Colonic mucosa (tissue), 4 donors: ENCODE measurements at regions of chr6 and their contacts with region 1.

Region 1: DNA sequence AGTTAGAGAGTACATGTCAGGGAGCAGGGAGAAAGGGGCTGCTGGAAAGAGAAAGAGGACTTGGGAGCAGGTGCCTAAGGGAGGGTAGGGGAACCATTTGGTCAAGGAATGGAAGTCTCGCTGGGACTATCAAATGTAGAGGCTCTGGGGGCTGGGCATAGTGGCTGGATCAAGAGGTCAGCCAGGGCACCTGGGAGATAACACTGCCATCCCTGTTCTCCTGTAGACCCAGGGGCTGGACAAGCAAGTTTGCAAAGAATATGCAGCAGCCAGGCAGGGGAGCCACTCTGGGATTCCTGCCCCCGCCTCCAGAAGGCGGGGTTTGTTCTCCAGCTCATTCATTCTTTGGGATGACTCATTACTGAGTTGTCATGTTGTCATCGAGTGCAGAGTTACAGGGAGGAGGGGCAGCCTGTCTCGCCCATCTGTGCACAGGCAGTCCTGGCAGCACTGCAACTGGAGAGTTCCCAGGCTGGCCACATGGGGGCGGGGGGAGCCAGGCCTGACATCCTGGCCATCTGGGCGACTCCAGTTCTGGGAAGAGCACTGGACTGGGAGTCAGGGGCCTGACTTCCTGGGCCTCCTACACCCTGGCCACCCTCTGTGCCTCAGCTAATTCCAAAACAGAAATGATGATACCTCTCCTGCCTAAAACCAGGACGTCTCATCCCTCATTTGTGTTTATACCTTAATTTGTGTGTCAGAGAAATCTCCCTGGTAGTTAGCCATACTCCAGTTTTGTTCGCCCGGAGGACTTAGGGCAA is 28.2 kb upstream of the ZFAND3 start:
- DNase-seq: peak; percentile 93
- H3K4me3 ChIP-seq: no peak overlapping the region
- H3K27ac ChIP-seq: no peak overlapping the region
- H3K4me1 ChIP-seq: no peaks in the 10 kb centered on the region
- H3K27me3 ChIP-seq: no peaks in the 10 kb centered on the region
- CTCF ChIP-seq: peak; percentile 93

Region 2: DNA sequence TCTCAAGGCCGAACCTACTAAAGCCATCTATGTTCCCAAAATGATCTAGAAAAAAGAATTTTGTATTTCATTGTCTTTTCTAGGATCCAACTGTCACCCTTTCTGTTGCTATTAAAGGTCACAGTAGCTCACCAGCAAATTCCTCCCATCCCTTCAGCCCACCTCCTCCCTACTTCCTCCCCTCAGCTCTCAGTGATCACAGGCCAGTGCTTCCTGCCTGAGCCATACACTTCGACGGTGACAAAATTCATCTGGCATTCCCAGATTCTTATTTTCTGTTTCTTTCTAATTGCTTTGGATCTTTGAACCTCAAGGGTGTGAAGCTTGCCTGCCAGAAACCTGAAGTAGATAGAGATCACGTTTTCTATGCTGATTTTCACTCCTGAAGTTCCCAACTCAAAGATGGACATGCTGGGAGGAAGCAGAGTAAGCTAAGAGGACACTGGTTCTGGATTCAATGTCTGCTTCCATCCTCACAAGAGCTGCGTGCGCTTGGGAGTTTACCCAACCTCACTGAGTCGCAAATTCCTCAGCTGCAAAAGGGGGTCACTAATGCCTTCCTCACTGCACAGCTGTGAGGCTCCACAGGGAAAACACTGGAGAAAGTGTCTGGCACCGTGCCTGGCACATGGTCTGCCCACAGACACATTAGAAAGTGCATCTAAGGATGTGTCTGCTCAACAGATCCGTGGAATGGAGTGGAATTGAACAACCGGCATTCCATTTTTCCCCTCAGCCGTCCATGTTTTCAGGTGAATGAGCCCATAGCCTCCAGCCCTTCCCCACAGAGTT is 128.1 kb before region 1 on chr6:
- intact Hi-C with region 1: no loop called
- DNase-seq: no peak
- H3K4me3 ChIP-seq: no peak overlapping the region
- H3K27ac ChIP-seq: no peak overlapping the region
- H3K4me1 ChIP-seq: no peaks in the 10 kb centered on the region
- H3K27me3 ChIP-seq: no peaks in the 10 kb centered on the region
- CTCF ChIP-seq: no peak

Region 3: GRCh38 chr6:37777272-37777834 is 14.0 kb before region 1 on chr6:
- intact Hi-C with region 1: no loop called
- DNase-seq: no peak
- H3K4me3 ChIP-seq: no peak overlapping the region
- H3K27ac ChIP-seq: no peak overlapping the region
- H3K4me1 ChIP-seq: no peaks in the 10 kb centered on the region
- H3K27me3 ChIP-seq: no peaks in the 10 kb centered on the region
- CTCF ChIP-seq: no peak

Region 4: DNA sequence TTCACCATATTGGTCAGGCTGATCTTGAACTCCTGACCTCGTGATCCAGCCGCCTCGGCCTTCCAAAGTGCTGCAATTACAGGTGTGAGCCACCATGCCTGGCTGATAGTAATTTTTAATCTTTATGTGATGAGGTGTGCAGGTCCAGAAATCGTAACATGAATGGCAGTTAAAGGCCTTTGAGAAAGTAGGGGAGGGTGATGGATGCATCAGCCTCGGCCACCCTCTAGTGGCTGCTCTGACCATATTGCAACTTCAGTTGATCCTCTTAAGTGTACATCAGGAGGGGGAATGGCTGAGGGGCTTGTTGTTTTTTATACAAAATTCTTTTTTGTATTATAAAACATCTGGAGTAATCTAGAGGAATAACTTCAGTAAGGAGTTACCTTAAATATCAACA is 221.2 kb after region 1 on chr6:
- intact Hi-C with region 1: loop called (anchors 10 kb)
- DNase-seq: no peak
- H3K4me3 ChIP-seq: no peak overlapping the region
- H3K27ac ChIP-seq: no peak overlapping the region
- H3K4me1 ChIP-seq: no peaks in the 10 kb centered on the region
- H3K27me3 ChIP-seq: no peaks in the 10 kb centered on the region
- CTCF ChIP-seq: peak; percentile 25